ENCODE measurements at regions of chr5 and their contacts with region 1.

Region 1: GRCh38 chr5:168268949-168269943 is 22.2 kb upstream of the WWC1 start:
- DNase-seq: no peak
- ATAC-seq: peak; percentile 97
- H3K4me3 ChIP-seq: peak overlapping the region; percentile 56; the same call in 1 of the 2 replicates
- H3K27ac ChIP-seq: no peak overlapping the region
- H3K4me1 ChIP-seq: peaks cover 3% of the 10 kb centered on the region
- H3K27me3 ChIP-seq: no peaks in the 10 kb centered on the region
- CTCF ChIP-seq: peak; percentile 80 to 89 (median 81)
- EP300 ChIP-seq: no peak
- POLR2A ChIP-seq: no peak
- RAD21 ChIP-seq: peak; percentile 98

Region 2: GRCh38 chr5:168405145-168405544 is 135.9 kb after region 1 on chr5:
- CTCF ChIA-PET with region 1: no interaction called
- POLR2A ChIA-PET with region 1: no interaction called
- RAD21 ChIA-PET with region 1: no interaction called
- SMC1A ChIA-PET with region 1: no interaction called
- in situ Hi-C with region 1: no loop called
- intact Hi-C with region 1: no loop called
- DNase-seq: no peak
- ATAC-seq: no peak
- H3K4me3 ChIP-seq: no peak overlapping the region
- H3K27ac ChIP-seq: no peak overlapping the region
- H3K4me1 ChIP-seq: peaks cover 11% of the 10 kb centered on the region
- H3K27me3 ChIP-seq: no peaks in the 10 kb centered on the region
- CTCF ChIP-seq: no peak
- EP300 ChIP-seq: no peak
- POLR2A ChIP-seq: no peak
- RAD21 ChIP-seq: no peak

Region 3: DNA sequence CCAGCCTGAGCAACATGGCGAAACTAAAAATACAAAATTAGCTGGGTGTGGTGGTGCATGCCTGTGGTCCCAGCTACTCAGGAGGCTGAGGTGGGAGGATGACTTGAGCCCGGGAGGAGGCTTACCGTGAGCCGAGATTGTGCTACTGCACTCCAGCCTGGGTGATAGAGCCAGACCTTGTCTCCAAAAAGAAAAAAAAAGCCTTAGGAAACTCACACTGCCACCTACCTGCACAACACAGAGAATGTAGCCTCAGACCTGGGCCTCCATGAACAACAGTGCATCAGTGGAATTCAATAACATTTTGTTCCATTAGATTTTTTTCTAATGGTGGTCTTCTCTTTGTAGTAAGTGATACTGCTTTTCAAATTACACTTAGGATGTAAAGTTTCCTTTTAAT is 153.2 kb after region 1 on chr5:
- CTCF ChIA-PET with region 1: no interaction called
- POLR2A ChIA-PET with region 1: no interaction called
- RAD21 ChIA-PET with region 1: interaction called, 3 read pairs
- SMC1A ChIA-PET with region 1: no interaction called
- in situ Hi-C with region 1: no loop called
- intact Hi-C with region 1: loop called (anchors 5 kb)
- DNase-seq: no peak
- ATAC-seq: peak; percentile 45; the same call in 2 of the 3 replicates
- H3K4me3 ChIP-seq: no peak overlapping the region
- H3K27ac ChIP-seq: no peak overlapping the region
- H3K4me1 ChIP-seq: no peaks in the 10 kb centered on the region
- H3K27me3 ChIP-seq: no peaks in the 10 kb centered on the region
- CTCF ChIP-seq: peak in 2 of 3 experiments; percentile 3 to 16; a peak in 1 of 6 replicates
- EP300 ChIP-seq: no peak
- POLR2A ChIP-seq: no peak
- RAD21 ChIP-seq: peak; percentile 20; the same call in 1 of the 2 replicates

Region 4: GRCh38 chr5:168647083-168647482 is 377.8 kb after region 1 on chr5:
- CTCF ChIA-PET with region 1: no interaction called
- POLR2A ChIA-PET with region 1: no interaction called
- RAD21 ChIA-PET with region 1: no interaction called
- SMC1A ChIA-PET with region 1: no interaction called
- in situ Hi-C with region 1: no loop called
- intact Hi-C with region 1: no loop called
- DNase-seq: no peak
- ATAC-seq: no peak
- H3K4me3 ChIP-seq: no peak overlapping the region
- H3K27ac ChIP-seq: no peak overlapping the region
- H3K4me1 ChIP-seq: no peaks in the 10 kb centered on the region
- H3K27me3 ChIP-seq: no peaks in the 10 kb centered on the region
- CTCF ChIP-seq: no peak
- EP300 ChIP-seq: no peak
- POLR2A ChIP-seq: no peak
- RAD21 ChIP-seq: no peak

Region 5: GRCh38 chr5:168679515-168679920 is 410.3 kb after region 1 on chr5:
- CTCF ChIA-PET with region 1: no interaction called
- POLR2A ChIA-PET with region 1: no interaction called
- RAD21 ChIA-PET with region 1: interaction called, 3 read pairs
- SMC1A ChIA-PET with region 1: no interaction called
- in situ Hi-C with region 1: no loop called
- intact Hi-C with region 1: loop called (anchors 5 kb)
- DNase-seq: peak; percentile 16
- ATAC-seq: peak; percentile 88
- H3K4me3 ChIP-seq: no peak overlapping the region
- H3K27ac ChIP-seq: no peak overlapping the region
- H3K4me1 ChIP-seq: no peaks in the 10 kb centered on the region
- H3K27me3 ChIP-seq: no peaks in the 10 kb centered on the region; a peak in 1 of 4 replicates
- CTCF ChIP-seq: peak; percentile 78 to 91 (median 83)
- EP300 ChIP-seq: no peak
- POLR2A ChIP-seq: no peak
- RAD21 ChIP-seq: peak; percentile 86